ENCODE measurements at regions of chr3 and their contacts with region 1.

Region 1: GRCh38 chr3:160003520-160004128 is 15.0 kb downstream of the IL12A start:
- DNase-seq: peak in 1 of 2 donors; percentile 62
- ATAC-seq: peak; percentile 62
- H3K4me3 ChIP-seq: no peak overlapping the region
- H3K27ac ChIP-seq: no peak overlapping the region
- H3K4me1 ChIP-seq: peaks cover 0 to 2% of the 10 kb centered on the region in 2 donors
- H3K27me3 ChIP-seq: no peaks in the 10 kb centered on the region

Region 2: DNA sequence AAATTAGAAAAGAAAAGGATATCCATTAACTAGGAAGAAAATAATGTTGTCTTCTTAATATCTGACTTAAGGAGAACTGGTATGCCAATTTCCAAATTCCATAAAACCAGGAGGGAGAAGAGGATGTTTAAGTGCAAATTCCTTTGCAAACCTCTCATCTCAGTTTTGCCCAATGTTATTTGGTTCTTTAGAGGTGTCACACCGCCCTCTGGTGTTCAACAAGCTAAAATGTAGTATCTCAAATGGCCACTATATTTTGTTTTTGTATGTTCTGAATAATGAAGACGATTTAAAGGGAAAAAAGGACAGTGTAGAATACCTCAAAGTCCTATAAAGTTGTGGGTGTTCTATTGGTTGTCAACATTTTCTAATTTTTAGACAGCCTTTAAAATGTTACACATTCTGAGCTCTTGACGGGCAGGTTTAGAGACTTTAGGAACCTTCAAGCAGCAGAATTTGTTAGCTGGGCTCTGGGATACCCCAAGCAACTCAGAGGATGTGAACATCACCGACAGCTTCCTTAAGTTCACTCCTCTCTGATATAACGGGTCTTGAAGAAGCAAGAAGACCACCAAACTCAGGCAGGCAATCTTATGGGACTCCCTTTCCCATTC is 743.5 kb before region 1 on chr3:
- intact Hi-C with region 1: loop called in 1 of 2 experiments (anchors 5 kb)
- DNase-seq: no peak
- ATAC-seq: no peak
- H3K4me3 ChIP-seq: no peak overlapping the region
- H3K27ac ChIP-seq: no peak overlapping the region
- H3K4me1 ChIP-seq: no peaks in the 10 kb centered on the region
- H3K27me3 ChIP-seq: no peaks in the 10 kb centered on the region

Region 3: GRCh38 chr3:159616212-159616825 is 387.3 kb before region 1 on chr3:
- intact Hi-C with region 1: loop called (anchors 5 kb)
- DNase-seq: peak; percentile 53 to 83
- ATAC-seq: peak; percentile 64
- H3K4me3 ChIP-seq: no peak overlapping the region
- H3K27ac ChIP-seq: no peak overlapping the region
- H3K4me1 ChIP-seq: peaks cover 0 to 1% of the 10 kb centered on the region in 2 donors
- H3K27me3 ChIP-seq: no peaks in the 10 kb centered on the region

Region 4: GRCh38 chr3:159828542-159828943 is 175.1 kb before region 1 on chr3:
- intact Hi-C with region 1: loop called (anchors 5 to 10 kb)
- DNase-seq: no peak
- ATAC-seq: no peak
- H3K4me3 ChIP-seq: no peak overlapping the region
- H3K27ac ChIP-seq: no peak overlapping the region
- H3K4me1 ChIP-seq: peaks cover 7 to 8% of the 10 kb centered on the region in 2 donors
- H3K27me3 ChIP-seq: no peaks in the 10 kb centered on the region

Region 5: DNA sequence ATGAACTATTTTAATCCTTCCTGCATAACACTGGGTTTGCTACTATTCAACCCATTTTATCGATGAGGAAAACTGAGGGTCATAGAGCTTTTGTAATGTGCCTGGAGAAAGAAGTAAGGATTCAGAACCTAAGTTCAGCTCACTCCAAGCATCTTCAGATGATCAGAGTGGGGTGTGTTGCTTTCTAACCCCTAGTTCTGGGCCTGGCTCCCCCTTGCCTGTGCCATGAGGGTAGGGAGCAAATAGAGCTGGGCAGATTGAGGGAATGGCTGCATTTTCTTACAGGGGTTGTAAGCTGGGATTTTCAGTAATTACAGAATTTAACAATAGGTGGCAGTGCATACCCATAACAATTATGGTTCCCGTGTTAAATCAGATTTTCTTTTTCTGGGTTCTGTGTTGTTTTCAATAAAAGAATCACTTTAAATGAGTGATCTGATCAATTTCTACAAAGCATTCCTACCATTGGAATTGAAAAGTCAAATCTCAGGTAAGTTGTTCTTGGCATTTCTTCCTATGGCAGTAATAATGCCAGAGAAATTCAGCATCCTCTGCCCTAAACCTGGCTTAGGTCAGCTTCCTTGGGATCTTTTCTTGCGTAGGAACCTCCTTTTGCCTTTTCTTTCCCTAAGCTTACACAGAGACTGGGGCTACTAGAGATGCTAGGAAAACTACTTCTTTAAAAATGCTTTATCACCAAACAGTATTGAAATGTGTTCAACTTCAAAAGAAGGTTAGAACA is 118.8 kb before region 1 on chr3:
- intact Hi-C with region 1: loop called (anchors 2 to 10 kb)
- DNase-seq: no peak
- ATAC-seq: peak; percentile 45
- H3K4me3 ChIP-seq: no peak overlapping the region
- H3K27ac ChIP-seq: no peak overlapping the region
- H3K4me1 ChIP-seq: peaks cover 6 to 12% of the 10 kb centered on the region in 2 donors
- H3K27me3 ChIP-seq: no peaks in the 10 kb centered on the region

Region 6: DNA sequence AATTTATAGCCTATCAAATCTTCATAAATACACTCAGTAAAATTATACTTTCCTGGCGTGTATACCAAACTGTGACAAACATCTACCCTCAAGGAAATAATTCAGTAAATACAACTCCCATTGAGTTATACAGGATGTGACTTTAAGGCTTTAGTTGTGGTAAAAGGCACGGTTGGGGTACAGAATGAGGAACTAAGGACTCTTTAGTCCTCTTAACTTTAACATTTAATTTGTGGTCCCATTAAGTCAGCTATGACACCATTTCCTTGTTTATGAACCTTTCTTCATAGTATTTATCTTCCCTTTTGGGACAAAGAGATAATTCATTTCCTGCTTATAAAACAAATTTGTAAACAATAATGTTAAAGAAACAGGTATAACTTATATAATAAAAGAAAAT is 365.2 kb after region 1 on chr3:
- intact Hi-C with region 1: no loop called
- DNase-seq: no peak
- ATAC-seq: no peak
- H3K4me3 ChIP-seq: no peak overlapping the region
- H3K27ac ChIP-seq: no peak overlapping the region
- H3K4me1 ChIP-seq: no peaks in the 10 kb centered on the region
- H3K27me3 ChIP-seq: no peaks in the 10 kb centered on the region